Activated T-helper 1 cell treated with anti-CD3 and anti-CD28 coated beads, Interleukin-12 subunit alpha, Interleukin-12 subunit beta, Interleukin-2, Interleukin-4 antibody, amounts not matched to agents 30 ng/mL and 10 ng/mL and 1 ng/mL, durations not matched to agents 14 hours and 24 hours and 36 hours (primary cell): ENCODE measurements at regions of chr5 and their contacts with region 1.

Region 1: GRCh38 chr5:142713121-142713706 is 27.3 kb upstream of the FGF1 start:
- DNase-seq: peak; percentile 75
- H3K4me3 Mint-ChIP-seq: peak overlapping the region; percentile 71
- H3K27ac Mint-ChIP-seq: no peak overlapping the region
- H3K4me1 Mint-ChIP-seq: peaks cover 13% of the 10 kb centered on the region
- H3K27me3 Mint-ChIP-seq: peaks cover 11% of the 10 kb centered on the region

Region 2: GRCh38 chr5:141664732-141665461 is 1048.3 kb before region 1 on chr5:
- intact Hi-C with region 1: loop called (anchors 10 kb)
- DNase-seq: peak; percentile 59
- H3K4me3 Mint-ChIP-seq: no peak overlapping the region
- H3K27ac Mint-ChIP-seq: no peak overlapping the region
- H3K4me1 Mint-ChIP-seq: no peaks in the 10 kb centered on the region
- H3K27me3 Mint-ChIP-seq: peaks cover 2% of the 10 kb centered on the region

Region 3: GRCh38 chr5:142263346-142263745 is 449.9 kb before region 1 on chr5:
- intact Hi-C with region 1: no loop called
- DNase-seq: no peak
- H3K4me3 Mint-ChIP-seq: no peak overlapping the region
- H3K27ac Mint-ChIP-seq: no peak overlapping the region
- H3K4me1 Mint-ChIP-seq: no peaks in the 10 kb centered on the region
- H3K27me3 Mint-ChIP-seq: peaks cover 11% of the 10 kb centered on the region

Region 4: DNA sequence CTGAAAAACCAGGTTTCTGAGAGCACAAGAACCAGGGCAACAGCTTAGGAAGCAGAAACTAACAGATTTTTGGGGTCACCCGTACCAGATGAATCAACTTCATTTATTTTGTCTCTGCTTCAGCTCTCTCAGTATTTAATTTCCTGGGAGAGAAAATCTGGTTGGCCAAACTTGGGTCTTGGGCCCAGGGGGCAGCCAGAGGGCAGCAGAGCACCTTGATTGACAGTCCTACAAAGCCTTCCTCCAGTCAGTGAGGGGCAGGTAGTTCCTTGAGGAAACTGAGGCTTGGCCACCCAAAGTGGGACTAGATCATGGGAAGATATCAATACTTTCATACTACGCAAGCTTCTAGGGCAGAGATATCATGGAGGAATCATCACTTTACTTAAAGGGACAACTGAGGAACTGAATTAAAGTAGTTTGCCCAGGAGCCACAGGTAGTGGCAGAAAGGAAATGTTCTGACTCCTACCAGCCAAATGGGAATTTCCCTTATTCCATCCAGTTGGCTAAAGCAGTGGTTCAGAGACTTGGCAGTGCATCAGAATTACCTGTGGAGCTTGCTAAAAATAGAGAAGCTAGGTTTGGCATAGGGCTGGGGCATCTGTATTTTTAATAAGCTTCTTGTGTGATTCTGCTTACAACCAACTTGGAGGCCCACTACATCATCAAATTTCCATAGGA is 35.5 kb after region 1 on chr5:
- intact Hi-C with region 1: loop called (anchors 2 kb)
- DNase-seq: no peak
- H3K4me3 Mint-ChIP-seq: no peak overlapping the region
- H3K27ac Mint-ChIP-seq: no peak overlapping the region
- H3K4me1 Mint-ChIP-seq: peaks cover 16% of the 10 kb centered on the region
- H3K27me3 Mint-ChIP-seq: peaks cover 2% of the 10 kb centered on the region

Region 5: DNA sequence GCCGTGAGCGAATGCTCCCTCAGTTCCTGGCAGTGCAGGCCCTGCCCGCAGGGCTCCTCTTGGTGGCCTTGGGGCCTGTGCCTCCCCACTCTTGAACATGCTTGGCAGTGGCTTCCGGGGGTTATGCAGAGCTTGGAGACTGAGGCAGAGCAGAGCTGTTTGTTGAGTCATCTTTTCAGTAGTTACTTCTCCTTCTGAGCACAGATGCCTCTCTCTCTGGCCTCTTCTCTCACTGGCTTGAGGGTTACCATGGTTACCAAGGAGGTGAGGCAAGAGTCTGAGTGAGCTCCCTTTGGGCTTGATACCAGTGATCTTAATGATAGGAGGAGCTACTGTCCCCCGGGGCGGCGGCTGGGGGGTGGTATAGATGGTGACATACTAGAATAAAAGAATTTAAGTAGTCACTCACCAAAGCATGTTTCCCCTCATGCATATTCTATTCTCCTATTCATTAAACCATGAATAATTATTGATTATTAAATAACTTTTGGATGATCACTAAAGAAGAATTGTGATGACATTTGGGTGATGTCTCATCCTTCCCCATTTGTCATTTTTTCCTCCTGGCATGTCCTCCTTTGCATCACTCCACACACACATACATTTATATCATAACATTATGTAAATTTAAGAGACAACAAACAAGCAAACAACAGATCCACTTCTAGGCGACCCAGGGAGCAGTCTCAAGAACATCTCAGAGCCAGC is 168.0 kb after region 1 on chr5:
- intact Hi-C with region 1: loop called (anchors 1 kb)
- DNase-seq: no peak
- H3K4me3 Mint-ChIP-seq: no peak overlapping the region
- H3K27ac Mint-ChIP-seq: no peak overlapping the region
- H3K4me1 Mint-ChIP-seq: peaks cover 6% of the 10 kb centered on the region
- H3K27me3 Mint-ChIP-seq: no peaks in the 10 kb centered on the region

Region 6: GRCh38 chr5:143968011-143968878 is 1255.0 kb after region 1 on chr5:
- intact Hi-C with region 1: loop called (anchors 5 kb)
- DNase-seq: no peak
- H3K4me3 Mint-ChIP-seq: no peak overlapping the region
- H3K27ac Mint-ChIP-seq: no peak overlapping the region
- H3K4me1 Mint-ChIP-seq: no peaks in the 10 kb centered on the region
- H3K27me3 Mint-ChIP-seq: peaks cover 17% of the 10 kb centered on the region